PC-3 (cell line): ENCODE measurements at regions of chr11 and their contacts with region 1.

Region 1: GRCh38 chr11:75233742-75234172 is 6.8 kb upstream of the TPBGL start:
- DNase-seq: peak; percentile 77
- ATAC-seq: no peak
- H3K4me3 ChIP-seq: no peak overlapping the region
- H3K27ac ChIP-seq: no peak overlapping the region
- H3K4me1 ChIP-seq: no peaks in the 10 kb centered on the region
- H3K27me3 ChIP-seq: peaks cover 23% of the 10 kb centered on the region; the same call in 1 of the 2 replicates
- CTCF ChIP-seq: no peak

Region 2: DNA sequence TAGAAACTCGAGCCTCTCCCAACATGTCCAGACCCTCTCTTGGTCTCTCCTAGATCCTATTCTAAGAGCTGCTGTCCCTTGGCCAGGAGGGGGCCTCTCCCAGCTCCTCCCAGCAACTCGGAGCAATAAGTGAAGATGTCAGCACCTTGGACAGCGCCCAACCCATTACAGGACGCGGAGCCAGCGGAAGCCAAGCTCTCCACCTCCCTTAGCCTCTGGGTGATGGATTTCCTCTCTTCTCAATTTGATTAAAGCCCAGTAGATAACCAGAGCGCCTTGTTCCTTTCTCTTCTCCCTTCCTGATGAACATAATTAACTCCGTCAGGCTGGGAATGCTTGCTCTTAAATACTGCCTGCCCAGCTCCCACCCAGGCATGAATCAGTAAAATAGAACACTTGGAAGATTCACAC is 19.3 kb before region 1 on chr11:
- CTCF ChIA-PET with region 1: no interaction called
- POLR2A ChIA-PET with region 1: no interaction called
- intact Hi-C with region 1: loop called (anchors 1 kb)
- DNase-seq: peak; percentile 90
- ATAC-seq: peak; percentile 77
- H3K4me3 ChIP-seq: no peak overlapping the region
- H3K27ac ChIP-seq: no peak overlapping the region
- H3K4me1 ChIP-seq: no peaks in the 10 kb centered on the region
- H3K27me3 ChIP-seq: peaks cover 24% of the 10 kb centered on the region
- CTCF ChIP-seq: peak; percentile 54; the same call in 1 of the 2 replicates